ENCODE measurements at regions of chr12 and their contacts with region 1.

Region 1: DNA sequence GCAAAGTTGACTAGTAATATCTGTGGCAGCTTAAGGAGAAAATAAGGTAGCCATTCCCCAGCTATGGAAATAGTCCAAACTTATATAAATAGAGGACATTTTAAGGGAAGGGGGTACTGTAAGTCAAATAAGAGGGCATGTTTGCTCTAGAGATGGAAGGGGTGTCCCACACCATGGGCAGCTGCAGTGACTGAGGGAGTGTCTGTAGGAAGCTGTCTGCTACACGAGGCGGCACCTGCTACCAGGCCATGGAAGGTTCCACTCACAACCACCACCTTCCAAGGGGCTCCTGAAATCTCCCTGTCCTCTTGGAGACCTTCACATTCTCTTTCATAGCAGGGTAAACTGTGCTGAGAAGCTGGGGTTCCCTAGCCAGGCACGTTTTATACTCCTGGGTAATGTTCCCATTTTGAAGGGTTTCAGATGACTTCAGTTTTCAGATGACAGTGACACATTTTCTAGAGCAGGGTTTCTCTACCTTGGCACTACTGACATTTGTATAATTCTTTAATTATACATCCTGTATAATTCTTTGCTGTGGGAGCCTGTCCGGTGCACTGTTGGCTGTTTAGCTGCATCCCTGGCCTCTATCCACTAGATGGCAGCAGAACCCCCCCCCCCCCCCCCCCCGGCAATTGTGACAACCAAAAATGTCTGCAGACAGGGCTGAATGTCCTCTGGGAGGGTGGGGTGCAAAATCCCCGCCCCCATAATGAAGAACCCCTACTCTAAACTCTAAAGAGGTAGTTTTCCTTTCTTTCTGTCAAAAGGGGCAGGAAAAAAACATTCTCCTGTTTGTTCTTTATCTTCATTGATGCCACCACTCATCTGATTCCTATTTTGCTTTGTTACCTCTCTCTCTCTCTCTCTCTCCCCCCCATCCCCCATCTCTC is 11.6 kb upstream of the SMCO2 start:
- DNase-seq: peak; percentile 52
- ATAC-seq: peak; percentile 60
- H3K4me3 Mint-ChIP-seq: no peak overlapping the region
- H3K27ac Mint-ChIP-seq: peak overlapping the region; percentile 86
- H3K4me1 Mint-ChIP-seq: peaks cover 77% of the 10 kb centered on the region
- H3K27me3 Mint-ChIP-seq: peaks cover 4% of the 10 kb centered on the region

Region 2: GRCh38 chr12:27284751-27285150 is 150.2 kb before region 1 on chr12:
- CTCF ChIA-PET with region 1: no interaction called
- POLR2A ChIA-PET with region 1: no interaction called
- DNase-seq: no peak
- ATAC-seq: no peak
- H3K4me3 Mint-ChIP-seq: no peak overlapping the region
- H3K27ac Mint-ChIP-seq: no peak overlapping the region
- H3K4me1 Mint-ChIP-seq: peaks cover 3% of the 10 kb centered on the region
- H3K27me3 Mint-ChIP-seq: no peaks in the 10 kb centered on the region

Region 3: DNA sequence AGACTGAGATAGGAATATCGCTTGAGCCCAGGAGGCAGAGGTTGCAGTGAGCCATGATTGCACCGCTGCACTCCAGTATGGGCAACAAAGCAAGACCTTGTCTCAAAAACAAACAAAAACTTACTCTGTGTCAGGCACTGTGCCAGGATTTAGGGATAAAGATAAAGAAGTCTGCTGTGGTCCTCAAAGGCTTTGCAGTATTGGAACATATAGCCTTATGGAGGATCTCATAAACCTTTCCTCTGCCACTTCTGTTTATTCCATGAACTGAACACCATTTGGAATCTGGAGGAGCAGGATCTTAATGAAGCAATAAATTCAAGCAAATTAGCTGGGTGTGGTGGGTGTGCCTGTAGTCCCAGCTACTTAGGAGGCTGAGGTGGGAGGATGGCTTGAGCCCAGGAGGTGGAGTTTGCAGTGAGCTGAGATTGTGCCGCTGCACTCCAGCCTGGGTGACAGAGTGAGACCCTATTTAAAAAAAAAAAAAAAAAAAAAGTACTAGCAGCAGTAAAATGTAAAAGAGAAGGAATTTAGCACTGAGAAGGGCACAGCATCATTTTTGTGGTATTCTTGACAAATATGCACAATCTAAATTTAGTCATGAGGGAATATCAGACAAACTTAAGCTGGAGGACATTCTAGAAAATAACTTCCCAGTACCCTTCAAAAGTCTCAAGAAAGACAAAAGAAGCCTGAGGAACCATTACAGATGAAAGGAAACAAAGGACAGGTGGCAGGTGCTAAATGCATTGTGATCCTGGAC is 75.2 kb before region 1 on chr12:
- CTCF ChIA-PET with region 1: no interaction called
- POLR2A ChIA-PET with region 1: no interaction called
- DNase-seq: no peak
- ATAC-seq: no peak
- H3K4me3 Mint-ChIP-seq: no peak overlapping the region
- H3K27ac Mint-ChIP-seq: no peak overlapping the region
- H3K4me1 Mint-ChIP-seq: no peaks in the 10 kb centered on the region
- H3K27me3 Mint-ChIP-seq: peaks cover 30% of the 10 kb centered on the region

Region 4: GRCh38 chr12:27424631-27425230 is 10.2 kb before region 1 on chr12:
- CTCF ChIA-PET with region 1: interaction called, 25 read pairs
- POLR2A ChIA-PET with region 1: no interaction called
- DNase-seq: no peak
- ATAC-seq: no peak
- H3K4me3 Mint-ChIP-seq: no peak overlapping the region
- H3K27ac Mint-ChIP-seq: no peak overlapping the region
- H3K4me1 Mint-ChIP-seq: peaks cover 7% of the 10 kb centered on the region
- H3K27me3 Mint-ChIP-seq: no peaks in the 10 kb centered on the region

Region 5: DNA sequence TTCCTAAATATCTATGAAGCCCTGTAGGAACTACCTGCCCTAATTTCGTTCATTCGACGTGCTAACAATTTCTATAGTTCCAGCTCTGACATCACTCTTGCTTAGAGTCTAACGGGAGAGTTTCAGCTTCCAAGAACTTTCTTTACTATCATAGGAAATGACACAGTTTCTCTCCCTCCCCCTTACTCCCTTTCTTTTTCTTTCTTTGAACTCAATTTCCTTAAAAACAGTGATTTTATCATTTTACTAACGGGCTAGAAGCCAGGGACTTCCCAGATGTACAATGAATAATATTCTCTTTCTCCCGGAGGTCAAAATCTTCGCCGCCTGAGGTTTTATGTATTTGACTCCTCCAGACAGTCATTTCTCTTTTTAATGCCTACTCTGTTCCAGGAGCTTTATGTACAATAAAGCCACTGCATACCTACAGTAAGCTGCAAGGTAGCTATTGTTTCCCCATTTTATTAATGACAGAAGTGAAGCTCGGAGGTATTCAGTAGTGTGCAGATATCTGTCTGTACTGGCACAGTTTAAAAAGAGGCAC is 27.3 kb after region 1 on chr12:
- CTCF ChIA-PET with region 1: interaction called, 14 read pairs
- POLR2A ChIA-PET with region 1: interaction called, 3 read pairs
- DNase-seq: no peak
- ATAC-seq: no peak
- H3K4me3 Mint-ChIP-seq: no peak overlapping the region
- H3K27ac Mint-ChIP-seq: peak overlapping the region; percentile 69
- H3K4me1 Mint-ChIP-seq: peaks cover 71% of the 10 kb centered on the region
- H3K27me3 Mint-ChIP-seq: no peaks in the 10 kb centered on the region

Region 6: GRCh38 chr12:27488479-27488878 is 53.6 kb after region 1 on chr12:
- CTCF ChIA-PET with region 1: interaction called, 21 read pairs
- POLR2A ChIA-PET with region 1: no interaction called
- DNase-seq: peak; percentile 47
- ATAC-seq: peak; percentile 30
- H3K4me3 Mint-ChIP-seq: no peak overlapping the region
- H3K27ac Mint-ChIP-seq: no peak overlapping the region
- H3K4me1 Mint-ChIP-seq: peaks cover 11% of the 10 kb centered on the region
- H3K27me3 Mint-ChIP-seq: peaks cover 9% of the 10 kb centered on the region

Region 7: GRCh38 chr12:27498149-27498548 is 63.2 kb after region 1 on chr12:
- CTCF ChIA-PET with region 1: interaction called, 12 read pairs
- POLR2A ChIA-PET with region 1: interaction called, 3 read pairs
- DNase-seq: peak; percentile 25
- ATAC-seq: peak; percentile 84
- H3K4me3 Mint-ChIP-seq: no peak overlapping the region
- H3K27ac Mint-ChIP-seq: peak overlapping the region; percentile 31
- H3K4me1 Mint-ChIP-seq: peaks cover 44% of the 10 kb centered on the region
- H3K27me3 Mint-ChIP-seq: peaks cover 13% of the 10 kb centered on the region

Region 8: DNA sequence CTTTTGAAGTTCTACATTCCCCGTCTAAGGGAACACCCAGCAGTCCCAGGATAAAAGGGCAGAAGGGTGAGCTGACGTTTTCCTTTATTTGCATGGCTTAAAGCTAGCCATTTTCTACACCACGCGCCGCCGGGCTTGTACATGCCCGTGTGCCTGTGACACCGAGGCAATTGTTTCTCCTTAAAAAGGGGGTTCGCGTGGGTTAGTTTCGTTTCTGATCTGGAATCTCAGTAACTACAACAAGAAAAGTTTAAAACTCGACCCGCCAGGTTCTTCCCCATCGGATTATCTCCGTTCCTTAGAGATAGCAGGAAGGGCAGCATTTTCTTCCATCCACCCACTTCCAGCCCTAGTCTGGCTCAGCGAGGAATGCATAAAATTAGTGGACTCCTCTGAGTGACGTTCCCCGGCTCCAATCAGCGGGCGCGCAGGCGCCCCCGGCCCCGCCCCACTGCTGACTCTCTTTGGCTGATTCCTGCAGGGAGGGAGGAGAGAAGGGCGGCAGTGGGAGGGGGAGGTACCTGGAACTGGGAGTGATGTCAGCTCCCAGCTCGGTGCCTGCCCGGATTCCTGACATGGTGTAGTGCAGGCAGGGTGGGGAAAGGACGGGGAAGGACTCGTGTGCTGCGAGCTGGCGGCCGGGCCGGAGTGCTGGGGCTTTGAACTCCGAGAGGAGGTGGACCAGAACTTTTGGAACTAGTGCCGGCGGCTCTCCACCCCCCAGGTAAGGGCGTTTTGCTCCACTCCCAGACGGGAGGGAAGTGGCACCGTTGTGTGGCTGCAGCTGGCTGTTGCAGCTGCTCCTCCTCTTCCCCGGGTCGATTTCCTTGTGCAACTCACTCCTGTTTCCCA is 88.9 kb after region 1 on chr12 and contains the start of gene PPFIBP1:
- CTCF ChIA-PET with region 1: interaction called, 20 read pairs
- POLR2A ChIA-PET with region 1: no interaction called
- DNase-seq: peak; percentile 97
- ATAC-seq: peak; percentile 99
- H3K4me3 Mint-ChIP-seq: peak within 1 kb of the TSS; percentile 96
- H3K27ac Mint-ChIP-seq: peak within 1 kb of the TSS; percentile 90
- H3K4me1 Mint-ChIP-seq: peaks cover 25% of the 10 kb centered on the region
- H3K27me3 Mint-ChIP-seq: peaks cover 27% of the 10 kb centered on the region
- total RNA-seq, gene PPFIBP1: 17.5 TPM

Region 9: GRCh38 chr12:27652174-27652763 is 217.3 kb after region 1 on chr12:
- CTCF ChIA-PET with region 1: interaction called, 22 read pairs
- POLR2A ChIA-PET with region 1: no interaction called
- DNase-seq: peak; percentile 57
- ATAC-seq: no peak
- H3K4me3 Mint-ChIP-seq: no peak overlapping the region
- H3K27ac Mint-ChIP-seq: no peak overlapping the region
- H3K4me1 Mint-ChIP-seq: peaks cover 18% of the 10 kb centered on the region
- H3K27me3 Mint-ChIP-seq: no peaks in the 10 kb centered on the region